Body of pancreas (tissue), 4 donors: ENCODE measurements at regions of chr17 and their contacts with region 1.

Region 1: DNA sequence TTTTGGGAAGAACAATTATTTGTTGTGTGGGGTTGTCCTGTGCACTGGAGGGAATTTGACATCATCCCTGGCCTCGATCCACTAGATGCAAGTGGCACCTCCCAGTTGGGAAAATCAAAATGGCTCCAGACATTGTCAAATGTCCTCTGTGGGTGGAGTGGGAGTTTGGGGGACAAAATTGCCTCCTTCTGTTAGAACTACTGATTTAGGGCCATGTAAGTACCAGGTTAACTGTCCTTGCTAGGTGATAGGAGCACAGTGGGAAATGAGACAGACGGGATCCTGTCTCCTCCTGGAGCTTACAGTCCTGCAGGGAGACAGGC is 56.8 kb downstream of the ARHGAP23 start:
- DNase-seq: no peak
- ATAC-seq: no peak
- H3K4me3 ChIP-seq: no peak overlapping the region
- H3K27ac ChIP-seq: no peak overlapping the region
- H3K4me1 ChIP-seq: no peaks in the 10 kb centered on the region
- H3K27me3 ChIP-seq: no peaks in the 10 kb centered on the region
- CTCF ChIP-seq: no peak
- POLR2A ChIP-seq: no peak

Region 2: DNA sequence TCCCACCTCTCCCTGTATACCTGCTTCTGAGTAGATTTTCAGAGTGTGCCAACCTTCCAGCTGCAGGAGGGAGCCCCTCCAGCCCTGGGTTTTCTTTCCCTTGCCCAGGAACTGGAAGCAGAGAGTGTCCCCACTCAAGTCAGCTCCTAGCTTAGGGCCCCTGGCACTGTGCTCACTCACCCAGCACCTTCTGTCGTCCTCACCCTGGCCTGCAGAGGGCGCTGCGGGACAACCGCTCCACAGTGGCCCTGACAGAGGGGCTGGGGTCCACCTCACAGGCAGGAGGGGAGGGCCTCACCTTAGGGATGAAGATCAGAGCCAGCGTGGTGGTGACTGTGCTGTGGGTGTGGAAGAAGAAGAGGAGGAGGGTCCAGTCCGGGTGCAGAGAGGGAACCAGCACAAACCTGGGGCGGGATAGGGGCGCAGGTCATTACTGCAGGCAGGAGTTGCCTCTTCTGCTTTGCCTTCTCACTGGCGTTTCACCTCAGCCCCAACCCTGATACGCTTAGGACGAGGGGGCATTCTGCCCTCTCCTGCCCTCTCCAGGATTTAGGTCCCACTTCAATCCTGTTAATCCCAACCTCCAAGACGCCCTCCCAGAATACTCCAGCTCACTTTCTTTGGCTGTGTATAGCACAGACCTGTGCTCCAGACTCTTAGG is 151.3 kb before region 1 on chr17:
- intact Hi-C with region 1: loop called (anchors 10 kb)
- DNase-seq: peak in 1 of 4 donors; percentile 35
- ATAC-seq: no peak
- H3K4me3 ChIP-seq: no peak overlapping the region
- H3K27ac ChIP-seq: no peak overlapping the region
- H3K4me1 ChIP-seq: no peaks in the 10 kb centered on the region
- H3K27me3 ChIP-seq: no peaks in the 10 kb centered on the region
- CTCF ChIP-seq: peak in 5 of 7 experiments; percentile 19 to 30 (median 26)
- POLR2A ChIP-seq: no peak

Region 3: DNA sequence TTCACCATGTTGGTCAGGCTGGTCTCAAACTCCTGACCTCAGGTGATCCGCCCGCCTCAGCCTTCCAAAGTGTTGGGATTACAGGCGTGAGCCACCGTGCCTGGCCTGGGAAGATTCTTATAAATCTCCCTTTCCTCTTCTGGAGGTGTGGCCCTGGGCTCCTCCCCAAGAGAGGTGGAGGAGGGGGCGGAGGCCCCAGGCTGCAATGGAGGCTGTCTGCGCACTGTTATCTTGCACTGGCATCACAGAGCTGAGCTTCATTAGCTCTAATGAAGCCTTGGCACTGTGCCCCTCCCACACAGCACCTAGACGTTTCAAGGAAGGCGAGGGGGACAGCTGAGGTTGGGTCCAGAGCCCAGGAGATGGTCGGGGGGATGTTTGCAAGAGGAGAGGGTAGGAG is 49.3 kb before region 1 on chr17:
- intact Hi-C with region 1: loop called (anchors 5 kb)
- DNase-seq: no peak
- ATAC-seq: no peak
- H3K4me3 ChIP-seq: no peak overlapping the region
- H3K27ac ChIP-seq: no peak overlapping the region
- H3K4me1 ChIP-seq: no peaks in the 10 kb centered on the region
- H3K27me3 ChIP-seq: no peaks in the 10 kb centered on the region
- CTCF ChIP-seq: no peak
- POLR2A ChIP-seq: no peak

Region 4: GRCh38 chr17:38608648-38609047 is 123.5 kb after region 1 on chr17:
- intact Hi-C with region 1: no loop called
- DNase-seq: peak; percentile 62 to 86 (median 78)
- ATAC-seq: no peak
- H3K4me3 ChIP-seq: no peak overlapping the region
- H3K27ac ChIP-seq: no peak overlapping the region
- H3K4me1 ChIP-seq: peaks cover 29% of the 10 kb centered on the region
- H3K27me3 ChIP-seq: no peaks in the 10 kb centered on the region
- CTCF ChIP-seq: no peak
- POLR2A ChIP-seq: no peak

Region 5: DNA sequence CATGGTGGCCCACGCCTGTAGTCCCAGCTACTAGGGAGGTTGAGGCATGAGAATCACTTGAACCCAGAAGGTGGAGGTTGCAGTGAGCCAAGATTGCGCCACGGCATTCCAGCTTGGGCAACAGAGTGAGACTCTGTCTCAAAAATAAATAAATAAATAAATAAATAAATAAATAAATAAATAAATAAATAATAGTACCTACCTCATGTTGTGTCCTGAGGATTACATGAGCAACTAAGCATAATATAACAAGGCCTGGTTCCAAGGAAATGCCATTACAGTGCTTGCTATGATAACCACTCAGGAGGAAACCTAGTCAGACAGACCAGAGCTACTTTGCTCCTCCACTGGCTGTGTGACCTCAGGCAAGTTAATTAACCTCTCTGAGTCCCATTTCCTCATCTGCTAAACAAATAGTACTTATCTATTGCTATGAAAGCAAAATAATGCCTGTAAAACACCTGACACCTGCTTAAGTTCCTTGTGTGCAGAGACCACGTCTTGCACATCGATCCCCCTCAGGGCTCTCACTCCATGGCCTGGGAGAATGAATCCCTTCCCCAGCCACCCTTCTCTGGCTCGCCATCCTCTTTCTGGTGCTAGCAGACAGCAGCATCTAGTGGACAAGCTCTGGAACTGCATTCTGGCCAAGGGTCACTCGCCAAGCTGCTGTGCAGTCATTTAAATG is 182.1 kb after region 1 on chr17:
- intact Hi-C with region 1: loop called (anchors 5 kb)
- DNase-seq: peak; percentile 69 to 76 (median 74)
- ATAC-seq: peak; percentile 81
- H3K4me3 ChIP-seq: no peak overlapping the region
- H3K27ac ChIP-seq: no peak overlapping the region
- H3K4me1 ChIP-seq: peaks cover 5% of the 10 kb centered on the region
- H3K27me3 ChIP-seq: peaks cover 0 to 7% of the 10 kb centered on the region in 2 donors
- CTCF ChIP-seq: peak; percentile 92 to 98 (median 97)
- POLR2A ChIP-seq: no peak